ENCODE measurements at regions of chr7 and their contacts with region 1.

Region 1: GRCh38 chr7:32942786-32943653 is 14.2 kb upstream of the FKBP9 start:
- DNase-seq: peak; percentile 59
- ATAC-seq: peak; percentile 96
- H3K4me3 ChIP-seq: peak overlapping the region; percentile 74 to 90 (median 85)
- H3K27ac ChIP-seq: peak overlapping the region; percentile 92
- H3K4me1 ChIP-seq: peaks cover 33% of the 10 kb centered on the region
- H3K27me3 ChIP-seq: peaks cover 0 to 2% of the 10 kb centered on the region in 2 experiments; a peak in 1 of 5 replicates
- CTCF ChIP-seq: peak; percentile 69
- EP300 ChIP-seq: peak in 1 of 2 experiments; percentile 38; a peak in 1 of 4 replicates
- POLR2A ChIP-seq: peak in 1 of 2 experiments; percentile 49; a peak in 1 of 4 replicates
- RAD21 ChIP-seq: peak; percentile 93

Region 2: DNA sequence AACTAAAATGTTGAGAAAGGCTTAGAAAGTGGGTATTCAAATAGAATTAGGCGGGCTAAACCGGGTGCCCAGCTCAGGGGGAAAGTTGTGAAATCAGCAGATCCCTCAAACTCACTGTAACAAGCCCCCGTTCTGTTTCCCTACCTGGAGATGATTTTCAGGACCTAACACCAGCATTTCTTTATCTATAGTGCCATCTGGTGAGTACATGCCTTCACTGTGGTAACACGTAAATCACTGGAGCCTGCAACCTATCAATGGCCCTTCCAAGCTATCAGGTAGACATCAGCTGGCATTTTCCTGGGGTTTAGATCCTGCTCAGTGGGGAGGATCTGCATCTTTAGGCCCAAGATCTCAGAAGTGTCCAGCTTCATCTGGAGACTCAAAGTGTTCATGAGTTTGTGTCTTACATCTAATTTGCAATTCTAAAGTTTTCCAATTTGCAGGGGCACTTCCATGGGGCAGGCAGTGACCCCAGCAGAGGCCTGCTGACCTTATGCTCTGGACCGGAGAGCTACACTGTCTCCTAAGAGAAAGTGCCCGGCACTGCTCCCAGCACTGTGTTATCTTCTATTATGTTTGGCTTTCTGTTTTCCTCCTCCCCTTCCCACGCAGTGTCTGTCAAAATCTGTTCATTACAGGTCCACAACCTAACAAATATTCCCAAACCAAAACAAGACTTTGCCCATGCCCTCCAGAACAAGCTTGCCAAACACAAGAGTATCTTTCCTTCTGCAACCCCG is 585.3 kb before region 1 on chr7:
- CTCF ChIA-PET with region 1: no interaction called
- POLR2A ChIA-PET with region 1: no interaction called
- in situ Hi-C with region 1: no loop called
- intact Hi-C with region 1: no loop called
- DNase-seq: no peak
- ATAC-seq: no peak; the same call in 2 of the 3 replicates
- H3K4me3 ChIP-seq: no peak overlapping the region
- H3K27ac ChIP-seq: no peak overlapping the region
- H3K4me1 ChIP-seq: no peaks in the 10 kb centered on the region
- H3K27me3 ChIP-seq: peaks cover 0 to 4% of the 10 kb centered on the region in 2 experiments; a peak in 1 of 5 replicates
- CTCF ChIP-seq: peak; percentile 22; the same call in 1 of the 2 replicates
- EP300 ChIP-seq: no peak
- POLR2A ChIP-seq: no peak
- RAD21 ChIP-seq: no peak

Region 3: DNA sequence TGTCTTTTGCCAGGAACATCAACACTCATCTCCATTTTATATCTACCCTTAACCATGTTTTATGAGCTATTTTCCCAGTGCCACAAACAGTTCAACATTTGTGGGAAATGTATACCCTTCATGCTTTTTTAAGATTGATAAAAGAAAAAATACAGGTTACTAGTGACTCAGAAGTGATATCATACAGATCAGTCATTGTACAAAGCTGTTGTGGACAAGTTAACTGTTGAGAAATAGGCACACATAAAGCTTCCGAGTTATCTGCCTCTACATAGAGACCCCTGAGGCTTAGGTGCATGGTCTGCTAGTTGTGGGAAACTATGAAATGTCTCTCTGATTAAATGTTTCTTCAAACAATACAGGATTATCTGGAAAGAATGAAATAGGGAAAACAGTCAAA is 549.2 kb before region 1 on chr7:
- CTCF ChIA-PET with region 1: no interaction called
- POLR2A ChIA-PET with region 1: no interaction called
- in situ Hi-C with region 1: no loop called
- intact Hi-C with region 1: no loop called
- DNase-seq: no peak
- ATAC-seq: no peak
- H3K4me3 ChIP-seq: no peak overlapping the region
- H3K27ac ChIP-seq: no peak overlapping the region
- H3K4me1 ChIP-seq: no peaks in the 10 kb centered on the region
- H3K27me3 ChIP-seq: no peaks in the 10 kb centered on the region
- CTCF ChIP-seq: no peak
- EP300 ChIP-seq: no peak
- POLR2A ChIP-seq: no peak
- RAD21 ChIP-seq: no peak

Region 4: GRCh38 chr7:32803406-32804141 is 139.4 kb before region 1 on chr7:
- CTCF ChIA-PET with region 1: interaction called, 4 read pairs
- POLR2A ChIA-PET with region 1: no interaction called
- in situ Hi-C with region 1: no loop called
- intact Hi-C with region 1: loop called (anchors 1 kb)
- DNase-seq: no peak
- ATAC-seq: no peak
- H3K4me3 ChIP-seq: no peak overlapping the region
- H3K27ac ChIP-seq: no peak overlapping the region
- H3K4me1 ChIP-seq: no peaks in the 10 kb centered on the region
- H3K27me3 ChIP-seq: no peaks in the 10 kb centered on the region
- CTCF ChIP-seq: no peak
- EP300 ChIP-seq: no peak
- POLR2A ChIP-seq: no peak
- RAD21 ChIP-seq: no peak

Region 5: DNA sequence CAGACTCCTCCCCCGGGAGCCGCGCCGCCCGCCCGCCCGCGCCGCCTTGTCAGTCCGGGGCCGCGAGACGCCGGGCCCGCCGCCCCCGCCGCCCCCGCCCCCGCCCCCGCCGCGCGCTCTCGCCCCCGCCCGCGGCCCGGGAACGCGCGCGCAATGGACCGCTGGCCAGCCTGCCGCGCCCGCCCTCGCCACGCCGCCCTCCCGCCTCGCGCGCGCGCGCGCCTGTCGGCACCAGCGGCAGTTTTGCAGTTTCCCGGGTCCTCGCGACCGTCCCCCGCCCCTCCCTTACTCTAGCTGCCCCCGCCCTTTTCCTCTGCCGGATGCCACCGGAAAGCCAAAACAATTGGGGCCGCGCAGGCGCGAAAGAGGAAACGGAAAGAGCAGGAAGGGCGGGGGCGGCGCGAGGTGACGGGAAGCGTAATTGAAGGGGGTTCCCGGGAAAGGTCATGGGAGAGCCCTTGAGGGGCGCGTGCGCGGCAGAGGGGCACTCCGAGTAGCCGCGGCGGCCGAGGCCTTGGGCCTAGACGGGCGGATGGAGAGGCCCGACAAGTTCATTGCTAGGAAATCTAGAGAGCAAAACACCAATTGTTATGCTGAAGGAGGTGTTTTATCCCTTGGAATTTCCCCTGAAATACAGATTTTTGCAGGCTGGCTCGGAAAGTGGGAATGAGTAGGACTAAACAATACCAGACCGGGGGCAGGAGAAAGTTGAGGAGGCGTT is 51.1 kb before region 1 on chr7:
- CTCF ChIA-PET with region 1: no interaction called
- POLR2A ChIA-PET with region 1: interaction called, 6 read pairs
- in situ Hi-C with region 1: no loop called
- intact Hi-C with region 1: loop called (anchors 2 kb)
- DNase-seq: peak; percentile 97
- ATAC-seq: peak; percentile 81
- H3K4me3 ChIP-seq: peak overlapping the region; percentile 79 to 97 (median 80)
- H3K27ac ChIP-seq: peak overlapping the region; percentile 96
- H3K4me1 ChIP-seq: peaks cover 52% of the 10 kb centered on the region
- H3K27me3 ChIP-seq: no peaks in the 10 kb centered on the region
- CTCF ChIP-seq: no peak
- EP300 ChIP-seq: peak in 1 of 2 experiments; percentile 7; a peak in 1 of 4 replicates
- POLR2A ChIP-seq: peak; percentile 81 to 85
- RAD21 ChIP-seq: no peak

Region 6: DNA sequence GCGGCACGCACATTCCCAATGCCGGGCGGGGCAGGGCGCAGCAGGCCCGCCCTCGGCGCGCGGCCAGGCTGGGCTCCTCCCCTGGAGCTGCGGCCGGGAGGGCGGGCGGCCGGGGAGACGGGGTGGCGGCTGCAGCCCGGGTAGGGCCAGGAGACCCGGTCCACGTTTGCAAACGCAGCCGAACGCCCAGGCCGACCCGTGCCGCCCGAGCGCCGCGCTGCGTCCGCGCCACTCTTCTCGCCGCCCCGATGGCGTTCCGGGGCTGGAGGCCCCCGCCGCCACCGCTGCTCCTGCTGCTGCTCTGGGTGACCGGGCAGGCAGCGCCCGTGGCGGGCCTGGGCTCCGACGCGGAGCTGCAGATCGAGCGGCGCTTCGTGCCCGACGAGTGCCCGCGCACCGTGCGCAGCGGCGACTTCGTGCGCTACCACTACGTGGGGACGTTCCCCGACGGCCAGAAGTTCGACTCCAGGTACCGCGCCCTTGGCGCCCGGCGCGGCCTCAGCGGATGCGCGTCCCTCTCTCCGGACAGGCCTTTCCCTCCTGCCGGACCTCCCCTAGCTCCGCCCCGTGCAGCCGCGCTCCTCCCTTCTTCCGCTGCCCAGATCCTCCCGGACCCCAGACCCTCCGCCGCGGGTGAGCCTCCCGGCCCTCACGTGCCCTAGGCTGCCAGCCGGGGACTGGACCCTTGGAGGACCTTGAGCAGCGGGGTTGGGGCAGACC is 14.5 kb after region 1 on chr7 and contains the start of gene FKBP9:
- CTCF ChIA-PET with region 1: no interaction called
- POLR2A ChIA-PET with region 1: interaction called, 30 read pairs
- in situ Hi-C with region 1: no loop called
- intact Hi-C with region 1: loop called (anchors 1 kb)
- DNase-seq: peak; percentile 76
- ATAC-seq: peak; percentile 96
- H3K4me3 ChIP-seq: peak within 1 kb of the TSS; percentile 68 to 90 (median 75)
- H3K27ac ChIP-seq: peak within 1 kb of the TSS; percentile 95
- H3K4me1 ChIP-seq: peaks cover 18% of the 10 kb centered on the region
- H3K27me3 ChIP-seq: no peaks in the 10 kb centered on the region
- CTCF ChIP-seq: 0 out of 2 replicates have a peak, but pooled peaks have one; percentile 10
- EP300 ChIP-seq: no peak
- POLR2A ChIP-seq: peak; percentile 87 to 96
- RAD21 ChIP-seq: no peak; the same call in 1 of the 2 replicates
- total RNA-seq, gene FKBP9: 24.5 and 41.5 TPM in 2 replicates

Region 7: DNA sequence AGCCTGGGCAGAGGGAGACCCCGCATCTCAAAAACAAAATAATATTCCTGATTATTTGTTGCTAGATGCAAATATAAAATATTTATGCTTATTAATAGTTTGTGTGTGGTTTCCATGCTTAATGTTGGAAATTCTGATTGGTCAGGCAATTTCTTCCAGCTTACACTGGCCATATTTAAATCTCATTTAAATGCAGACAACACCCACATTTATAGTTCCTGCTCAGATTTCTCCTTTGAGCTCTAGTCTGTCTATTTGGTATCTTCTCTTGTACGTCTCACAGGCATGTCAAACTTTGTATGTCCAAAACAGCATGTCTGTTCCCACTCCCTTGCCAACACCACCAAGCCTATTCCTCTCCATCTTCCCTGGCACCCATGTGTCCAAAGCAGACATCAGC is 66.7 kb after region 1 on chr7:
- CTCF ChIA-PET with region 1: no interaction called
- POLR2A ChIA-PET with region 1: no interaction called
- in situ Hi-C with region 1: no loop called
- intact Hi-C with region 1: no loop called
- DNase-seq: no peak
- ATAC-seq: no peak
- H3K4me3 ChIP-seq: no peak overlapping the region
- H3K27ac ChIP-seq: no peak overlapping the region
- H3K4me1 ChIP-seq: no peaks in the 10 kb centered on the region
- H3K27me3 ChIP-seq: no peaks in the 10 kb centered on the region
- CTCF ChIP-seq: no peak
- EP300 ChIP-seq: no peak
- POLR2A ChIP-seq: no peak
- RAD21 ChIP-seq: no peak

Region 8: GRCh38 chr7:33062782-33063443 is 119.9 kb after region 1 on chr7:
- CTCF ChIA-PET with region 1: no interaction called
- POLR2A ChIA-PET with region 1: interaction called, 11 read pairs
- in situ Hi-C with region 1: no loop called
- intact Hi-C with region 1: no loop called
- DNase-seq: peak; percentile 90
- ATAC-seq: peak; percentile 98
- H3K4me3 ChIP-seq: peak overlapping the region; percentile 78 to 100 (median 93)
- H3K27ac ChIP-seq: peak overlapping the region; percentile 90
- H3K4me1 ChIP-seq: peaks cover 41% of the 10 kb centered on the region
- H3K27me3 ChIP-seq: no peaks in the 10 kb centered on the region
- CTCF ChIP-seq: peak; percentile 18; the same call in 1 of the 2 replicates
- EP300 ChIP-seq: no peak
- POLR2A ChIP-seq: peak; percentile 46 to 78; a peak in 3 of 4 replicates
- RAD21 ChIP-seq: no peak; the same call in 1 of the 2 replicates

Region 9: GRCh38 chr7:33109005-33109757 is 166.2 kb after region 1 on chr7 and contains the start of gene RP9:
- CTCF ChIA-PET with region 1: no interaction called
- POLR2A ChIA-PET with region 1: no interaction called
- in situ Hi-C with region 1: no loop called
- intact Hi-C with region 1: loop called (anchors 5 kb)
- DNase-seq: peak; percentile 71
- ATAC-seq: peak; percentile 91
- H3K4me3 ChIP-seq: peak within 1 kb of the TSS; percentile 85 to 88 (median 87)
- H3K27ac ChIP-seq: peak within 1 kb of the TSS; percentile 77
- H3K4me1 ChIP-seq: peaks cover 55% of the 10 kb centered on the region
- H3K27me3 ChIP-seq: peaks cover 1 to 6% of the 10 kb centered on the region in 2 experiments; a peak in 2 of 5 replicates
- CTCF ChIP-seq: peak; percentile 76
- EP300 ChIP-seq: no peak
- POLR2A ChIP-seq: peak; percentile 69
- RAD21 ChIP-seq: peak; percentile 75; the same call in 1 of the 2 replicates
- total RNA-seq, gene RP9: 14.2 and 15.1 TPM in 2 replicates

Measured in HepG2 (cell line).